ENCODE measurements at regions of chr7 and their contacts with region 1.

Region 1: DNA sequence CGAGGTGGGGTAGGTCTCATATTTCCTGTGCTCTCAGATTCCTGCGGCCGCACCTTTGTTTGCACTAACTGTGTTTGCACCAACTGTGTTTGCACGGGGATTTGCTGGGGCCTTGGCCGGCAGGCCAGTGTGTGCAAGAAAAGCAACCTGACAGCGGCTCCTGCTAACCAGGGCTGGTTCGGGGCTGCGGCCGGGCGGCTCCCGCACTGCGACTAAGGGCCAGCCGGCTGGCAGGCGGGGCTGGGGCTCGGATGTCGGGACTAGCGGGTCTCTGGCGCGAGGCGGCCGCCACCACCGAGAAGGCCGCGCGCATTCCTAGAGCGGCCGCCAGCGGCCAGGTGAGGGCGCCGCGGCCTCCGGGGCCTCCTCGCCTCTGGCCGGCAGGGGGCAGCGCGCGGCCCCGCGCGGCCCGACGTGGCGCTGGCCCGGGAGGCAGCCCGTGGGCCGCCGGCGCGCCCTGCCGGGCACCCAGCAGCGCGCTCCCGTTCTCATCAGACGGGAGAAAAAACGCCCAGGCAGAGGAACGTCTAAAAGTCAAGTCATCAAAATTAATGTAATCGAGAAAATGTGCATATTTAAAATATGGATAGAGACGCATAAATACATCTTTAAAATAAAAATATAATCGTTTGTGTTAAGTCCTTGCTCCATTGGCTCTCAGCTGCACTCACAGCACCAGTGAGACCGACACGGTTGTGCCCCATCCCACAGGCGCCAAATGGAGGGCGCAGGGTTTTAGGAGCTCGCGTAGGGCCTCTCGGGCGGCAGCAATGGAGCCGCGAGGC is 38.5 kb downstream of the ZNF777 start:
- DNase-seq: peak; percentile 79
- ATAC-seq: peak; percentile 98
- H3K4me3 Mint-ChIP-seq: peak overlapping the region; percentile 84
- H3K27ac Mint-ChIP-seq: peak overlapping the region; percentile 74
- H3K4me1 Mint-ChIP-seq: peaks cover 8% of the 10 kb centered on the region
- H3K27me3 Mint-ChIP-seq: no peaks in the 10 kb centered on the region
- CTCF ChIP-seq: no peak

Region 2: GRCh38 chr7:148296994-148297644 is 1125.2 kb before region 1 on chr7:
- CTCF ChIA-PET with region 1: no interaction called
- POLR2A ChIA-PET with region 1: no interaction called
- intact Hi-C with region 1: no loop called
- DNase-seq: no peak
- ATAC-seq: no peak
- H3K4me3 Mint-ChIP-seq: no peak overlapping the region
- H3K27ac Mint-ChIP-seq: no peak overlapping the region
- H3K4me1 Mint-ChIP-seq: peaks cover 35% of the 10 kb centered on the region
- H3K27me3 Mint-ChIP-seq: no peaks in the 10 kb centered on the region
- CTCF ChIP-seq: no peak

Region 3: GRCh38 chr7:148650232-148650858 is 772.0 kb before region 1 on chr7:
- CTCF ChIA-PET with region 1: no interaction called
- POLR2A ChIA-PET with region 1: no interaction called
- intact Hi-C with region 1: no loop called
- DNase-seq: no peak
- ATAC-seq: no peak
- H3K4me3 Mint-ChIP-seq: no peak overlapping the region
- H3K27ac Mint-ChIP-seq: no peak overlapping the region
- H3K4me1 Mint-ChIP-seq: no peaks in the 10 kb centered on the region
- H3K27me3 Mint-ChIP-seq: peaks cover 2% of the 10 kb centered on the region
- CTCF ChIP-seq: no peak

Region 4: GRCh38 chr7:149125863-149126661 is 296.3 kb before region 1 on chr7 and contains the start of gene ZNF425:
- CTCF ChIA-PET with region 1: no interaction called
- POLR2A ChIA-PET with region 1: no interaction called
- intact Hi-C with region 1: loop called (anchors 1 kb)
- DNase-seq: peak; percentile 98
- ATAC-seq: peak; percentile 82
- H3K4me3 Mint-ChIP-seq: peak within 1 kb of the TSS; percentile 98
- H3K27ac Mint-ChIP-seq: peak within 1 kb of the TSS; percentile 98
- H3K4me1 Mint-ChIP-seq: peaks cover 21% of the 10 kb centered on the region
- H3K27me3 Mint-ChIP-seq: no peaks in the 10 kb centered on the region
- CTCF ChIP-seq: peak; percentile 31
- total RNA-seq, gene ZNF425: 1.4 and 1.9 TPM in 2 replicates

Region 5: GRCh38 chr7:149239345-149240191 is 182.8 kb before region 1 on chr7 and contains the start of gene ZNF212:
- CTCF ChIA-PET with region 1: interaction called, 3 read pairs
- POLR2A ChIA-PET with region 1: no interaction called
- intact Hi-C with region 1: loop called (anchors 1 kb)
- DNase-seq: peak; percentile 82
- ATAC-seq: peak; percentile 99
- H3K4me3 Mint-ChIP-seq: peak within 1 kb of the TSS; percentile 91
- H3K27ac Mint-ChIP-seq: peak within 1 kb of the TSS; percentile 76
- H3K4me1 Mint-ChIP-seq: peaks cover 37% of the 10 kb centered on the region
- H3K27me3 Mint-ChIP-seq: no peaks in the 10 kb centered on the region
- CTCF ChIP-seq: no peak
- total RNA-seq, gene ZNF212: 17.0 and 21.0 TPM in 2 replicates

Region 6: GRCh38 chr7:149310113-149310836 is 112.0 kb before region 1 on chr7:
- CTCF ChIA-PET with region 1: no interaction called
- POLR2A ChIA-PET with region 1: no interaction called
- intact Hi-C with region 1: loop called (anchors 1 kb)
- DNase-seq: no peak
- ATAC-seq: peak; percentile 49
- H3K4me3 Mint-ChIP-seq: no peak overlapping the region
- H3K27ac Mint-ChIP-seq: no peak overlapping the region
- H3K4me1 Mint-ChIP-seq: no peaks in the 10 kb centered on the region
- H3K27me3 Mint-ChIP-seq: peaks cover under 1% of the 10 kb centered on the region
- CTCF ChIP-seq: no peak

Region 7: DNA sequence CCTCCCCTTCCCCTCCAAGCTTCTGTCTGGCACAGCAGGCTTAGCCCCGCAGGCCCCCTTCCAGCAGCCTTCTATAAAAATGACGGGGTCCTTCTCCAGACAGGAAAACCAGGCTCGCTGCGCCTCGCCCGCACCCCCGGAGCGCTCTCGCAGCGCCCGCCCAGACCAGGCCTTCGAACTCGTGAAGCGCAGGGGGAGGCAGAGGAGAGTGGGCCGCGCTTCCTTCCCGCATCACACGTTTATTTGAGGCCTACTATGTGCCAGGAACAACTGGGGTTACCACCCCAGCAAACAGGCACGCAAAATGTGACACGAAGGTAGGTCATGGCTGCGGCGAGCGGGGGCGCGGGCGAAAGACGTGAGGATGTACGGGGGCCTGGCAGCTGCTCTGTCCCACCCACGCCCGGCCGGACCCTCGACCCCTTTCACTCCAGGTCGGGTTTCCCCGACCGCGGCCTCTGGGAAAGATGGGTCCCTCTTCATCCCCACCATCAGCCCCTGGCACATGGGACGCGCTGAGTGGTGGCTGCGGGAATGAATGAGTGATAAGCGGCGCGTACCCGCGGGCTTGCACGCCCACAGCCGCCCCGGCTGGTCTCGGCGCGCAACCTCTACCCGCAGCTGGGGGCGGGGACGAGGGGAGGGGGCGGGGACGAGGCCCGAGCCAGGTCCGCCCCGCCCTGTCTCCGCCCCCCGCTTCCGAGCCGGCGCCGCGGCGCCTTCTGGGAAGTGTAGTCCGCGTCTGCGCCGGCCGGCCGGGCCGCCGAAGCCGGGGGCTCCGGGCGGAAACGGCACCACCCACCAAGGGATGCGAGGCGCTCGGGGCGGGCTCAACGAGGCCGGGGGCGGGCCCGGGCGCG is 292.0 kb after region 1 on chr7:
- CTCF ChIA-PET with region 1: no interaction called
- POLR2A ChIA-PET with region 1: interaction called, 3 read pairs
- intact Hi-C with region 1: loop called (anchors 1 kb)
- DNase-seq: peak; percentile 88
- ATAC-seq: peak; percentile 91
- H3K4me3 Mint-ChIP-seq: peak overlapping the region; percentile 83
- H3K27ac Mint-ChIP-seq: no peak overlapping the region
- H3K4me1 Mint-ChIP-seq: peaks cover 17% of the 10 kb centered on the region
- H3K27me3 Mint-ChIP-seq: no peaks in the 10 kb centered on the region
- CTCF ChIP-seq: no peak

Region 8: DNA sequence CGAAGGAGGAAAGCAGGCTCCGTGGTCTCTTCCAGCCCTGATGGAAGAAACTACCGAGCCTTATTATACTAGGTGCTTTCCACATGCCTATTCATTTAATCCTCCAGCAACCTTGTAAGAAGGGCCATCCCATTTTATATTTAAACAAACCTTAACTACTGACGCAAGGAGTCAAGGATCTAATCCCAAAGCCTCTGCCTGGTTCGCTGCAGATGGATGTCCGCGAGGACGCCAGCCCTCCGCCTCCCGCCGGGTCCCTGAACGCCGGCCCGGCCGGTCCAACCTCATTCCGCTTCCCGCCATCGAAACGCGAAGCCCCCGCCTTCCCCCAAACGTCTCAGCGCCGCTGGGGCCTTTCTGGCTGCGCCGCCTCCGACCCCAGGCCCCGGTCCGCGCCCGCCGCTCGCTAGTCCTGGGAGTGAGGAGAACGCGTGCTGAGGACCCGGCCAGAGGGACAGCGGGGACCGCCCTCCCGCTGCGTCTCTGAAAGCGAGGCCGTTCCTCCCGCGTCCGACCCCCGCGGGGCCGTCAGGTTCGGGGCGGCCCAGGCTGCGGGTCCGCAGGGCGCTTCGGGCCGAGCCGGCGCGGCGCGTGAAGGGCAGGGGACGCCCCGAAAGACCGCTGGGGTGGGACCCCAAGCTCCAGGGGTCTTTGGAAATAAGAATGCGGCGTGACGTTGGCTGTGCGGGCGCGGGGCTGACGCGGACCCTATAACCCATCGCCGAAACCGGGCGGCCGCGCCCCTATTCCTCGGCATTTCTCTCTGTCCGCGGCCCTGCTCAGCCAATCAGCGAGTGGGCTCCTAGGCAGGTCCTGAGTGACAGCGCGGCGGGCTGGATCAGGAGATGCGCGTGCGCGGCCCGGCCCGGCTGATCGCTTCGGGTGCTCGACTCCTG is 451.0 kb after region 1 on chr7 and contains the start of gene ATP6V0E2:
- CTCF ChIA-PET with region 1: no interaction called
- POLR2A ChIA-PET with region 1: no interaction called
- intact Hi-C with region 1: loop called (anchors 10 kb)
- DNase-seq: peak; percentile 86
- ATAC-seq: peak; percentile 95
- H3K4me3 Mint-ChIP-seq: peak within 1 kb of the TSS; percentile 86
- H3K27ac Mint-ChIP-seq: peak within 1 kb of the TSS; percentile 53
- H3K4me1 Mint-ChIP-seq: peaks cover 42% of the 10 kb centered on the region
- H3K27me3 Mint-ChIP-seq: no peaks in the 10 kb centered on the region
- CTCF ChIP-seq: no peak
- total RNA-seq, gene ATP6V0E2: 9.1 and 10.4 TPM in 2 replicates

Measured in activated B cell treated with CpG ODN at 0.5 μM for 24 hours (primary cell).